HepG2 (cell line): ENCODE measurements at regions of chr11 and their contacts with region 1.

Region 1: DNA sequence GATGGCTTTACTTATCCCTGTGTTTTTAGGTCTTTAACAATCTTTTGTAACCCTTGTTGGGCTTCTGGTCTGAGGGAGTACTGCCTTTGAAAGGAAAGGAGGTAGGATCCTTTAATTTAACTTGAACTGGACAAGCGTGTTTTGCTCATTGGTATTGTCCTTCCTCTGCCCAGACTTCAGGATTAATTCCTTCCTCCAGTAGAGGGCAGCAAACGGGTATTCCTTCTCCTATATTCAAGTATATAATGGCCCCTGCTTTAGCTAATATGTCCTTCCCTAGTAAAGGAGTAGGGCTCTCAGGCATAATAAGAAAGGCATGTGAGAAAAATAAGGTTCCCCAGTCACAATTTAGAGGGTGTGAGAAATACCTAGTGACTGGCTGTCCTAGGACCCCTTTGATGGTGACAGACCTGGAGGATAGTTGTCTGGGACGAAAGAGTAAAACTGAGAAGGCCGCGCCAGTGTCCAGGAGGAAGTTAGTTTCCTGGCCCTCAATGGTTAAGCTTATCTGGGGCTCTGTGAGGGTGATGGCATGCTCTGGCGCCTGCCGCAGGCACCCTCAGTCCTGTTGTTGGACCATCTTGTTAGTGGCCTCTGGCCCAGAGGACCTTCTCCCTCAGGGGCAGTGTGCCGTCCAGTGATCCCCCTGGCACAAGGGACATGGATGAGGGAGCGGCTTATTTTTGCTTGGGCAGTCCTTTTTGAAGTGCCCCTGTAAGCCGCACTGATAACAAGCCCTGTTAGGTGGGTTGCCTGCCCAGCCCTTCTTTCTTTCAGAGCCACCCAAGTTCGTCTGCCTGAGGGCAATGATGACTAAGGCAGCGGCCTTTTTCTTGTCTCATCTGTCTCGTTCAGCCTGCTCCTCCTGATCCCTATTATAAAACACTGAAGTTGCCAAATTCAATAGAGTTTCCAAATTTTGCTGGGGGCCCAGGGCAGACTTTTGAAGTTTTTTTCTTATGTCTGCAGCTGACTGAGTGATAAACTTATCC is 51.8 kb downstream of the C11orf71 start:
- DNase-seq: peak; percentile 39
- ATAC-seq: peak; percentile 64
- H3K4me3 ChIP-seq: no peak overlapping the region
- H3K27ac ChIP-seq: no peak overlapping the region
- H3K4me1 ChIP-seq: no peaks in the 10 kb centered on the region
- H3K27me3 ChIP-seq: peaks cover 0 to 13% of the 10 kb centered on the region in 2 experiments; a peak in 2 of 5 replicates
- CTCF ChIP-seq: peak; percentile 61
- EP300 ChIP-seq: no peak
- POLR2A ChIP-seq: no peak
- RAD21 ChIP-seq: no peak

Region 2: GRCh38 chr11:114059278-114059983 is 289.1 kb before region 1 on chr11 and contains the start of gene ZBTB16:
- CTCF ChIA-PET with region 1: no interaction called
- POLR2A ChIA-PET with region 1: no interaction called
- in situ Hi-C with region 1: no loop called
- intact Hi-C with region 1: no loop called
- DNase-seq: no peak
- ATAC-seq: no peak
- H3K4me3 ChIP-seq: peak within 1 kb of the TSS in 1 of 3 experiments; percentile 64; a peak in 1 of 6 replicates
- H3K27ac ChIP-seq: no peak within 1 kb of the TSS
- H3K4me1 ChIP-seq: no peaks in the 10 kb centered on the region
- H3K27me3 ChIP-seq: peaks cover 9 to 72% of the 10 kb centered on the region in 2 experiments
- CTCF ChIP-seq: no peak
- EP300 ChIP-seq: no peak
- POLR2A ChIP-seq: no peak
- RAD21 ChIP-seq: no peak
- total RNA-seq, gene ZBTB16: not detected in 2 replicates

Region 3: GRCh38 chr11:114400217-114400914 is 51.9 kb after region 1 on chr11 and contains the starts of genes C11orf71 and RBM7:
- CTCF ChIA-PET with region 1: no interaction called
- POLR2A ChIA-PET with region 1: no interaction called
- in situ Hi-C with region 1: no loop called
- intact Hi-C with region 1: loop called (anchors 5 kb)
- DNase-seq: peak; percentile 96
- ATAC-seq: peak; percentile 97
- H3K4me3 ChIP-seq: peak within 1 kb of the TSS; percentile 97 to 99 (median 98)
- H3K27ac ChIP-seq: peak within 1 kb of the TSS; percentile 98
- H3K4me1 ChIP-seq: peaks cover 45% of the 10 kb centered on the region
- H3K27me3 ChIP-seq: peaks cover 0 to 3% of the 10 kb centered on the region in 2 experiments; a peak in 1 of 5 replicates
- CTCF ChIP-seq: 0 out of 2 replicates have a peak, but pooled peaks have one; percentile 40
- EP300 ChIP-seq: peak in 1 of 2 experiments; percentile 4; a peak in 1 of 4 replicates
- POLR2A ChIP-seq: peak; percentile 97 to 98
- RAD21 ChIP-seq: no peak
- total RNA-seq, gene C11orf71: 7.1 and 9.4 TPM in 2 replicates
- total RNA-seq, gene RBM7: 30.5 and 52.6 TPM in 2 replicates

Region 4: DNA sequence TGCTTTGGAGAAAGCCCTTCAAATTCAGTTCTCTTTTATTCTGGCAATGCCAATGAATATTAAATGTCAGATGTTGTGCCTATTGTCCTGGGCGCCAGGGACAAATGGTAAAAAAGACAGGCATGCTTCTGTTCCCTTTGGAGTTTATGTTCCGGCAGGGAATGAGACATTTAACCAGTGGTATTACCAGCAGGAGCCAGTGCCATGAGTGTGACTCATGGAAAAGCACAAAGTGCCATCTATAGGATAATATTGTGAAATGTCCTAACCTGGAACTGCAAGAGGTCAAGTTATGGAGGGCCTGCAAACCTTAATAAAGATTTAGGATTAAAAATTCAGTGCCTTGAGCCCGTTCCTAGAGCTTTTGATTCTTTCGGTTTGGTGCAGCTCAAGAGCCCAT is 130.3 kb after region 1 on chr11:
- CTCF ChIA-PET with region 1: no interaction called
- POLR2A ChIA-PET with region 1: no interaction called
- in situ Hi-C with region 1: no loop called
- intact Hi-C with region 1: loop called (anchors 5 kb)
- DNase-seq: peak; percentile 34
- ATAC-seq: peak; percentile 72
- H3K4me3 ChIP-seq: no peak overlapping the region
- H3K27ac ChIP-seq: no peak overlapping the region
- H3K4me1 ChIP-seq: no peaks in the 10 kb centered on the region
- H3K27me3 ChIP-seq: 0 out of 5 replicates have a peak, but pooled peaks cover 1 to 3% of the 10 kb centered on the region in 2 experiments
- CTCF ChIP-seq: peak; percentile 45
- EP300 ChIP-seq: no peak
- POLR2A ChIP-seq: no peak
- RAD21 ChIP-seq: no peak

Region 5: DNA sequence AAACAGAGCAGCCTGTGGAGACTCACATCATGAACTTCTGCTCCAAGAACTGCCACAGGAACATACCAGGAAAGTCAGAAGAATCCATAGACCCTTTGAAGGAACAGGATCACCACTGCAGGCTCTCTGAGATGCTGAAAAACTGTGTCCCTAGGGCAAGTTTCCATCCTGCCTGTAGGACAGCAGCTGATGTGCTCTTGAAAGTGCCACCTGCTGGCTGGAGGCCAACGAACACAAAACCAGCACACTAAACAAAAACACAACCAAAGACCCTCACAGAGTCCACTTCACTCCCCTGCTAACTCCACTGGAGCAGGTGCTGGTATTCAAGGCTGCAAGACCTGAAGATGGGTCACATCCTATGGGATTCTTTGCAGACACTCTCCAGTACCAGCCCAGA is 223.2 kb after region 1 on chr11:
- CTCF ChIA-PET with region 1: no interaction called
- POLR2A ChIA-PET with region 1: no interaction called
- in situ Hi-C with region 1: loop called (anchors 25 kb)
- intact Hi-C with region 1: loop called (anchors 2 kb)
- DNase-seq: no peak
- ATAC-seq: no peak
- H3K4me3 ChIP-seq: no peak overlapping the region
- H3K27ac ChIP-seq: no peak overlapping the region
- H3K4me1 ChIP-seq: no peaks in the 10 kb centered on the region
- H3K27me3 ChIP-seq: no peaks in the 10 kb centered on the region
- CTCF ChIP-seq: peak; percentile 31
- EP300 ChIP-seq: no peak
- POLR2A ChIP-seq: no peak
- RAD21 ChIP-seq: no peak